Astrocyte of the cerebellum (primary cell): ENCODE measurements at regions of chr10 and their contacts with region 1.

Region 1: DNA sequence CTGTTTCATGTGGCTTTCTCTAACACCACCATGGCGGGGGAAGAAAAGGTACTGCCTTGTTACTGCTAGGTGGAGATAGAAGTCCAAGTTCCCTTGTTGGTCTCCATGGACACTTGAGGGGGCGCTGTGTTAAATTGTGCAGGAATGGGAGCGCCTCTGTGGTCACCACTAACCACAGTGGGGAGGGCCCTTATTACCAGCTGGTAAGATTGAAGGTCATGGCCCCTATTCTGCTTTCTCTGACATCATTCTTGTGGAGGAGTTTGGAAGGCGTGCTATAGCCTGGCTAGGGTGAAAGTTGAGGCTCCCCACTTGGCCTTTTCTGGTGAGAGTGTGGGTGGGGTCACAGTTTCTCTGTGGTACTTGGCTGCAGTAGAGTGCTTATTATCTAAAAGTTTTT is 14.9 kb upstream of the MXI1 start:
- DNase-seq: no peak
- H3K4me3 ChIP-seq: no peak overlapping the region
- CTCF ChIP-seq: no peak

Region 2: DNA sequence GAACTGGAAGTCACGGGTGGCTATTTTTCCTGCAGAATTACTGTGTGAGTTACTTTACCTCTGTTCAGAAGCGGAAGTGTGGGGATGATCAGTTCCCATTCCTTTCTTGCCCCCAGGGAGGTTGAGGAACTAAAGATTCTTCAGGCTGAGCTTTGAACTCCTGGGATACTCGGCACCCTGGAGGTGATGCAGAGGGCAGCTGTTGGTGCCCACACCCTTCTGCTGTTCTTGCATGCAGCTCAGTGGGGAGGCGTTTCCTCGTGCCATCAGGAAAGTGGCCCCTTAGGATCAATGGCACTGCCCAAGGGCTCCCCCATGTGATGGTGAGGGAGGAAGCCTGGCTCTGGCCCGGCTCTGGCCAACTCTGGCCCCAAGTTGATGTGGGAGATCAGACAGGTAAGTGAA is 29.8 kb before region 1 on chr10:
- in situ Hi-C with region 1: loop called (anchors 5 kb)
- DNase-seq: no peak
- H3K4me3 ChIP-seq: no peak overlapping the region
- CTCF ChIP-seq: no peak

Region 3: GRCh38 chr10:110304394-110304779 is 111.8 kb after region 1 on chr10:
- in situ Hi-C with region 1: no loop called
- DNase-seq: no peak
- H3K4me3 ChIP-seq: peak overlapping the region; percentile 70
- CTCF ChIP-seq: no peak